Right ventricle myocardium inferior (tissue), 1 donor: ENCODE measurements at regions of chr16 and their contacts with region 1.

Region 1: DNA sequence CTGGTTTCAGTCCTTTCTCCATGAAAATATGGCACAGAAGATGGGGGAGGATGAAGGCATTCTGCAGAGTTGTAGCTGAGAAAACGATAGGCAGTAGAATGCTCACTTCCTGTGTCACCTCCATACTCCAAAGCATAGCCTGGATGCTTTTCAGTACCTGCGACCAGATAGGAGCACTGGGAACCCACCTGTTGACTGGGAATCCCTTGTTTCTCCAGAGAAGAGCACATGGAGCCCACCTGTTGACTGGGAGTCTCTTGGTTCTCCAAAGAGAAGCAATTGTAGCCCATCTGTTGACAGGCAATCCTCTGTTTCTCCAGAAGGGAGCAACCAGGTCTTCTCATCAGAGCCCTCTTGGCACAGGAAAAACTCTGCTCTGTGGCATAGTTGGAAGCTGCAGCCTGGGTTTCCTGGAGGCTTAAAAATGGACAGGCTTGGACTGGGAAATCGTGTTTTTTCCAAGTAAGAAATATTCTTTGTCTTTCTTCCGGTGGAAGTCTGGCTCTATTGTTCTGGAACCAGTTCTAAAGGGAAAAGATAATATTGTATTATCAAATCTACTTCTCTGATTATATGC is 13.2 kb downstream of the TERF2IP start:
- DNase-seq: no peak
- ATAC-seq: no peak

Region 2: DNA sequence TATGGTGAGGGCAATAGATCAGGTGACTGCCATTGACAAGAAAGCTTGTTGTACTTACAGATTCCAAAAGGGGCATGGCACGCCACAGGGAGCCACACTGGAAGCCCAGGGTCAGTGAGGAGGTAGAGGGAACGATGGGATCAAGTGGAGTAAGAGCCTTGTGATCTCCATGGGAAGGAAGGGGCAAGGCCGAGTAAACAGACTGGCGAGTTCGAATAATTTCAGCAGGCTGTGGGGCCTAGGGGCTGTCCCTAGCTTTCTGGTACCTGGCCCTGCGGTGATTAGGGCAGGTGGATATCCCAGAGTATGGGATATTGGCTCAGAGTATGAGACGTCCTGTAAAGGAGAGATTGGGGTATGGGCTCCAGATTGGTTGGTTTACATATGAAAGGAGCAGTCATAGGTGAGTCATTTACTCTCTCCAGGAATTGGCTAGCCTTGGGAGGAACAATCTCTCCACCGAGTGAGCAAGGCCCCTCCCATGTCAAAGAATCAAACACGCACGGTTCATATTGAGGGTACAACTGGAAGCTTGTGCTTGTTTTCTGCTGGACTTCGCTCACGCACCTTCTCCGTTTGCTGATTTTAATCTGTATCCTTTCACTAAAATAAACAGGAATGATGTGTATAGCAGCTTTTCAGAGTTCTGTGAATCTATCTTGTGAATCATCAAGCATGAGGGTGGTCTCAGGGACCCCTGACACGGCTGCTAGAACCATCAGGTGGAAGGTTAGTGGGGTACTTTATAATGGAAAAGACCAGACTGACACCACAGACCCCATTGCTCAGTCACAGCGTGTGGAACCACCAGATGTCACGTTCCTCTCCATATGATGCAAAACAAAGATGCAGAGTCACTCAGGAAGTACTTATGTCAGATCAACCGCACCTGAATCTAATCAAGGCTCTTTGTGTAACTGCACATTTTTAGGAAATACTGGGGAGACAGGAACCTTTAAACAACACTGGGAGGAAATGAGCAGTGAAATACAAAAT is 66.7 kb before region 1 on chr16:
- intact Hi-C with region 1: no loop called
- DNase-seq: no peak
- ATAC-seq: no peak

Region 3: DNA sequence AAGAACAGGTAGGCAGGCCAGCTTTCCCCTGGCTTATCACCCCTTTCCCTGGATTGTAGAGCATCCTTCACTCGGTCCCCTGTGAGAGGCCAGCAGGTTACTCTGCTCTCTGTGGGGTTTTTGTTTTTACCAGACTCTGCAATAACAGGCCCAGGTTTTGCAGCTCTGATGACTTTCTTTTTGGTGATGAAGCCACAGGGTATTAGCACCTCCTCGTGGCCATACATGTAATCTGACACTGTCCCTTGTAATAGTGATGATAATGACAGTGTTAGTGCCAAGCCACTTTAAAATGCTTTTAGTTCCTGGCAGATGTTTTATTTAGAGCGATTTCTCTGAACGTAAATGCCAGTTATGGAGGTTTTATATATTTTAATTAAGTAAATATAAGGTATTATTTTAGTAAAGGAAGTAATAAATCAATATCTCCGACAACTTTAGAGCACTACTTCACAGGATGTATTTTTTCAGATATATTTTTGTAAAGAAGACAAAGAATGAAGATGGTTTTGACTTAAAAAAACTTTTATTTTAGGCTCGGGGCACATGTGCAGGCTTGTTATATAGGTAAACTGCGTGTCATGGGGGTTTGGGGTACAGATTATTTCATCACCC is 103.4 kb after region 1 on chr16:
- intact Hi-C with region 1: loop called (anchors 5 kb)
- DNase-seq: no peak
- ATAC-seq: peak; percentile 84